HepG2 (cell line): ENCODE measurements at regions of chr16 and their contacts with region 1.

Region 1: GRCh38 chr16:70746708-70747424 is 54.1 kb downstream of the VAC14 start:
- DNase-seq: peak; percentile 99
- ATAC-seq: peak; percentile 90
- H3K4me3 ChIP-seq: peak overlapping the region in 2 of 3 experiments; percentile 3 to 56; a peak in 2 of 6 replicates
- H3K27ac ChIP-seq: peak overlapping the region; percentile 93
- H3K4me1 ChIP-seq: peaks cover 56% of the 10 kb centered on the region
- H3K27me3 ChIP-seq: no peaks in the 10 kb centered on the region
- CTCF ChIP-seq: peak; percentile 40
- EP300 ChIP-seq: peak; percentile 92; a peak in 3 of 4 replicates
- POLR2A ChIP-seq: peak; percentile 70 to 75
- RAD21 ChIP-seq: no peak; the same call in 1 of the 2 replicates

Region 2: DNA sequence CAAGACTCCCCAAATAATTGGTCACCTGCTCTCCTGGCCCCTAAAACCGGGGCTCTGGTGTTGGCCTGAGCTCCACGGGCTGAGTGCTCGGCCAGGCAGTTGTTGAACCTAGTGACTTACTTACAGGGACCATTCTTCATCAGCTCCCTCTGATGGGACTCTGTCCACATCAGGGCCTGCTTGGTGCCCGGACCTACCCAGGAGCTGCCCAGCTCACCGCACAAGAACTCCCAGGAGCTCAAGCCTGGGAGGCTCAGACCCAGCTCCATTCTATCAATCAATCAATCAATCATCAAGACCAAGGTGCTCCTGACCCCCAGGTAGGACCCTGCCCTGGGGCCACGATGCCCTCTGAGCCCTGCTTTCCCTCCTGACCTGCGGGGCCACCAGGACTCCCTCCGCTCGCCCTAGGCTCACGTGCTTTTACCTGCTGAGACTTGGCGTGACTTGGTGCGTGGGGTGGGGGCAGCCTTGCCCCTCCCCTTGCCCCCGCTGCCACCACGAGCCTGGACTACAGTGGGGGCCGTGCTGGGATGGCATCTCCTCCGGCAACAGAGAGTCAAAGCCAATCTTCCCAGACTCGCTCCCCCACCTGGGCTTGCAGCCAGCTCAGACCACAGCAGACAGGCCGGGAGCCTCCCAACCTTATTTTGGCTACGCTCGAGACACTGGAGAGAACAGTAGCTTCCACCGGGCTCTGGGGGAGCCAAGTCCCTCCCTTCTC is 84.8 kb before region 1 on chr16:
- CTCF ChIA-PET with region 1: no interaction called
- POLR2A ChIA-PET with region 1: interaction called, 11 read pairs
- in situ Hi-C with region 1: no loop called
- intact Hi-C with region 1: no loop called
- DNase-seq: no peak
- ATAC-seq: peak; percentile 1; the same call in 1 of the 3 replicates
- H3K4me3 ChIP-seq: no peak overlapping the region
- H3K27ac ChIP-seq: peak overlapping the region; percentile 19
- H3K4me1 ChIP-seq: peaks cover 20% of the 10 kb centered on the region
- H3K27me3 ChIP-seq: 0 out of 5 replicates have a peak, but pooled peaks cover 0 to under 1% of the 10 kb centered on the region in 2 experiments
- CTCF ChIP-seq: no peak
- EP300 ChIP-seq: no peak
- POLR2A ChIP-seq: peak; percentile 27 to 59; a peak in 2 of 4 replicates
- RAD21 ChIP-seq: no peak

Region 3: DNA sequence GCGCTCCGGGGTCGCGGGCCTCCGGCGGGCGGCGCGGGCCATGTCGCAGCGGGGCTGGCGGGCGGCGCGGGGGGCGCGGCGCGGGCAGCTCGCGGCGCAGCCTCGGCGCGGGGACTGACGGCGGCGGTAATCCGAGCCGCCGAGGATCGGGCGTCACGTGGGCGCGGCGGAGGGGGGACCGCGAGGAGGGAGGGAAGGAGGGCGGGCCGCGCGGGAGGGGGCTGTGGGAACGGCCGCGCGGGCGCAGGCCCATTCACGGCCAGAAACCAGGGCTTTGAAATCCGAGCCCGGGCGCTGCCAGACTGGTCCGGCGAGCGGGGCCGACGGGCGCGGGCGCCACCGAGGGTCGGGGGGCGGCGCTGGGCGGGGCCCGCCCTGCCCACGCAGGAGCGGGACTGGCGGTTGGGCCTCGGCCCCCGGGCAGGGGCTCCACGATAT is 60.9 kb before region 1 on chr16 and contains the start of gene MTSS2:
- CTCF ChIA-PET with region 1: no interaction called
- POLR2A ChIA-PET with region 1: interaction called, 107 read pairs
- in situ Hi-C with region 1: no loop called
- intact Hi-C with region 1: loop called (anchors 2 kb)
- DNase-seq: peak; percentile 80
- ATAC-seq: peak; percentile 16
- H3K4me3 ChIP-seq: peak within 1 kb of the TSS; percentile 86 to 93 (median 91)
- H3K27ac ChIP-seq: peak within 1 kb of the TSS; percentile 91
- H3K4me1 ChIP-seq: peaks cover 80% of the 10 kb centered on the region
- H3K27me3 ChIP-seq: no peaks in the 10 kb centered on the region; a peak in 1 of 5 replicates
- CTCF ChIP-seq: no peak
- EP300 ChIP-seq: peak in 1 of 2 experiments; percentile 54; a peak in 2 of 4 replicates
- POLR2A ChIP-seq: peak in 1 of 2 experiments; percentile 18; a peak in 1 of 4 replicates
- RAD21 ChIP-seq: peak; percentile 67
- total RNA-seq, gene MTSS2: 84.6 and 132 TPM in 2 replicates

Region 4: DNA sequence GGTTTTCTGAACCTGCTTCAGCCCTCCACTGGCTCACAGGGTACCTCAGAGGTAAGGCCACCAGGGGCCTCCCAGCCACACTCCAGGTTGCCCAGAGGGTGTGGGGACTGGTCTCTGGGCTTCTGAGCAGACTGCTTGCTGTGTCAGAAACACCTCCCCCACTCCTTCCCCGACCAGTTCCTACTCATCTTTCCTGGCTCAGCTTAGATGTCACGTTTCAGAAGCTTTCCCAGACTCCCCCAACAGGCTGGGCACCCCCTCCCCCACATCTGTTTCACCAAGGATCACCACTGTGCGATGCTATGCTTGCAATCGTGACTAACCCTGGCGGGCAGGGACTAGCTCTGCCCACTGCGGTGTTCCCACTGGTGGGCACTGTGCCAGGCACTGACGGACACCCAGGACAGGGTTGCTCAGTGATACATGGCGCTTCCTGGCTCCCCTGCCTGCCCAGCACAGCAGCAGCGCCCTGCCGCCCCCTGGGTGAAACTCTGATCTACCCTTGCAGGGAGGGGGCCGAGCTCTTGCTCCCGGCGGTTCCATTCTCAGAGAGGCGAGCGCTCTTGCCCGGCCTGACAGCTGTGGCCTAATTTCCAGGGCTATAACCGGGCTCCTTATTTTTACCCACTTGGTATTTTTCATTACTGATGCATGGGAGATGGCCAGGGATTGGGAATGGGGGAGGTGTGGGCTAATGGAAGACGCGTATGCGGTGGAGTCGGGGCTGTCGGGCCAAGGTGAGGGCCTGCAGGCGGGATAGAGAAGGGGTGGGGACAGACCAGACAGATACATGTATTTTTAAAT is 31.6 kb before region 1 on chr16:
- CTCF ChIA-PET with region 1: no interaction called
- POLR2A ChIA-PET with region 1: interaction called, 13 read pairs
- in situ Hi-C with region 1: no loop called
- intact Hi-C with region 1: no loop called
- DNase-seq: no peak
- ATAC-seq: no peak
- H3K4me3 ChIP-seq: no peak overlapping the region
- H3K27ac ChIP-seq: no peak overlapping the region
- H3K4me1 ChIP-seq: peaks cover 64% of the 10 kb centered on the region
- H3K27me3 ChIP-seq: no peaks in the 10 kb centered on the region
- CTCF ChIP-seq: no peak
- EP300 ChIP-seq: no peak
- POLR2A ChIP-seq: no peak
- RAD21 ChIP-seq: no peak

Region 5: DNA sequence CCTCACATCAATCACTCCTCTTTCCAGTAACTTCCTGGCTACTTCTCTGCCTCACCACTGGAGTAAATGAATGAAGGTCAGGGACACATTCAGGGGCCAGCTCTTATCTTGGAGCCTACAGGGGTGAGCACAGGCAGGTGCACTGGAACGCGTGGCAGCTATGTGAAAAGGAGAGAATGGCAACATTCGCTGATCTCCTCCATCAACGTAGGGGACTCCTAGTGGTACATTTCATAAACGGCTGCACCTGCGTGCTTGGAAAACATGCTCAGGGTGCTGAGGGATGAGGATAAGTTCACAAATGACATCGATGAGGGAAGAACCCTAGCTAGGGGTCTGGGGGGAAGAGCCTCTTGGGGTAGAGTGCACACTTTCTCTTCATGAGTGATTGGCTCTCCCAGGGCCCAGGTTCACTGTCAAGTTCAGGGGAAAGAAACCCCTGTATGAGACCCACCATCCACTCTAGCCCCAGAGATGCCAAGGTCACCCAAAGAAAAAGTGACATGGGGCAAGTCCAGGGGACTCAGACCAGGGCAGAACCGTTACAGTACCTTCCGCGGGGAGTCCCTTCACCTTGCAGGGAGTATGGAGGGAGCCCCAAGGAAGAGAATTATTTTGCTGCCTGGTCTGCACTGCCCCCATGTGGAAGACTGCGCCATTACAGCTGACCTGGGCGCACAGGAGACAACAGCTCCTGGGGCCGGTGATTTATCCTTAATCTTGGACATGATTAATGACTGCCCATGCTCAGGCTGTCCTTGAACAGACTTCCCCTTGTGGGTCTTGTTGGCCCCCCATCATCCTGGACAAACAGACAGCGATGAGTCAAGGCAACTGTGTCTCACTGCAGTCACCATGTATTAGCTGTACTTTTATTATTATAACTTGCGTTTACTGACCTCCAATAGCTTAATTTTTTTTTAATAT is 24.0 kb after region 1 on chr16:
- CTCF ChIA-PET with region 1: interaction called, 3 read pairs
- POLR2A ChIA-PET with region 1: interaction called, 23 read pairs
- in situ Hi-C with region 1: no loop called
- intact Hi-C with region 1: no loop called
- DNase-seq: peak; percentile 55
- ATAC-seq: peak; percentile 87
- H3K4me3 ChIP-seq: no peak overlapping the region
- H3K27ac ChIP-seq: no peak overlapping the region
- H3K4me1 ChIP-seq: peaks cover 12% of the 10 kb centered on the region
- H3K27me3 ChIP-seq: no peaks in the 10 kb centered on the region
- CTCF ChIP-seq: peak; percentile 93
- EP300 ChIP-seq: no peak
- POLR2A ChIP-seq: no peak
- RAD21 ChIP-seq: peak; percentile 95